ENCODE measurements at regions of chr5 and their contacts with region 1.

Region 1: DNA sequence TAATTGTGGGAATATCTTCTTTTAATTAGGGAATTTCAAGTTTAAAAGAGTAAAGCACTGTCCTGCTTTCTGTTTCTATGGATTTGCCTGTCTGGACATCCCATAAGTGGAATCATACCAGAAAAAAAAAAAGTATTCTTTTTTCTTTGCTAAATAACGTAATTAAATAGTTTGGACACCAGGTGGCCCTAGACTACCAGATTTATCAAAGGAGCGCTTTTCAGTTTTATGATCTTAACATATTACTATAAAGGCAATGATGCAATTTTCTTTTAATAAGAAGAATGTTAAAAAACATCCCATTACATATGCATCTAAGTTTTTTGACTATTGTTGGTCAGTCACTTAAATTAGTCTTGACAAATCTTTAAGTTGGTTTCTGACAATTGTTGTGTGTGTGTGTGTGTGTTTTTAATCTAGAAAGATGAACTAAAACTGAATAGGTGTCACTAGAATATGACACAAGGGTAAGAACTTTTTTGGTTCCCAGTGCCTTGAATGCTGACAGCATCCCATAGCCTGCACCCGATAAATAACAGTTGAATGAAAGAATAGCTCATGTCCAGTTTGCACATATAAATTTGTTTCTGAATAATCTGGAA is 49.5 kb downstream of the C5orf22 start:
- DNase-seq: no peak
- H3K4me3 ChIP-seq: no peak overlapping the region
- H3K27ac ChIP-seq: no peak overlapping the region
- H3K4me1 ChIP-seq: no peaks in the 10 kb centered on the region
- H3K27me3 ChIP-seq: peaks cover 0 to 10% (median 0%) of the 10 kb centered on the region in 4 donors
- CTCF ChIP-seq: peak in 5 of 6 experiments; percentile 26 to 66 (median 44)
- POLR2A ChIP-seq: no peak

Region 2: DNA sequence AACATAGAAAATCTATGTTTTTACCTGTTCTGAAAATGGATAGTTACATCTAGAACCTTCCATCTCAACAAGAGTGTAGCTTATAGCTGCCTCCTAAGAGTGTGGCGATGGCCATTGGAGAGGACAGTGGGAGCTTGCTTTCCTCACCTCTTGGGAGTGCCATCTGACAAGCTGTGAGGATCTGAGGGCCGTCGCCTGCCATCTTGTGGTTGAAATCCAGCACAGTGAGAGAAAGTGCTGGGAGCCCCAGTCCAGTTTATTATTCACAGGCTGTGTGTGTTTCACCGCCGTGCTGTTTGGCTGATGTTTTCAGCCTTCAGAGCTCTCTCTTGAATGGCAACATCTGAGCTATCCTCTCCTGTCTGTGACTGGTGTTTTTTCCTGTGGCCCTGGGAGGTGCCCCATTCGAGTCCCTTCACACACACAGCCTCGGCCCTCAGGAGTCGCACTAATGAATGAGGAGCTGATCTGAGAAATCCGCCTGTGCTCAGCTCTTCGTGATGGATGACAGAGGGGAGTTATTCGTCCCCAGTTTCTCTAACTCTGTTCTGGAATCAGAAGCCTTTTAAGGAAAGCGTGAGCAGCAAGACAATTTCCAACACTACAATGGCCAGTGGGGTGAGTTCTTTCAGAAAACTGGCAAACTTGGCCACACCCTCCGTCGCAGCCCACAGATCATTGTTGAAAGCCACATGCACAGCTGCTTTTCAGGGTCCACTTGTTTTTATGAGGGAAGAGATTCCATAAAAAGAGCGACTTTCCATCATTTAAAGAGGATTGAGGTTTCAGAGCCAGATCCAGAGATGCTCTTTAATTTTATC is 227.7 kb after region 1 on chr5:
- intact Hi-C with region 1: loop called (anchors 5 kb)
- DNase-seq: no peak
- H3K4me3 ChIP-seq: no peak overlapping the region
- H3K27ac ChIP-seq: no peak overlapping the region
- H3K4me1 ChIP-seq: no peaks in the 10 kb centered on the region
- H3K27me3 ChIP-seq: peaks cover 0 to 5% (median 0%) of the 10 kb centered on the region in 4 donors
- CTCF ChIP-seq: peak in 5 of 6 experiments; percentile 62 to 81 (median 69)
- POLR2A ChIP-seq: no peak

Region 3: DNA sequence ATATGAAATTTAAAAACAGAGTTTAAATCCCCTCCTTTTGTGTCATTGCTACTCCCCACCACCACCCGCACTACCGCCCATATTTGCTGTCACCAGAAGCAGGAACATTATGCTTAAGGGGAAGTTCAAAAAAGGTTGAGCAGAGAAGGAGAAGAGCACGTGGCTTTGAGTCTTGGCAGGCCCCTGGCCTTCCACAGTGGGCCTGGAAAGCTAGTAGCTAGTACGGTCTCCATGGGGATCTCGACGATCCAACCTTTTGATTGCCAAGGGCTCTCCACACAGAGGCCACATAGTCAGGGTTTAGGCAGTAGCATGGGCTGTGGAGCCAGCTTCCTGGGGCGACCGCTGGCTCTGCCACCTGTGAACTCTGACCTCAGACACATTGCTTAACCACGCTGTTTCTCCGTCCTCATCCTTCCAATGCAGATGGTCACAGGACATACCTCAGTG is 502.4 kb after region 1 on chr5:
- intact Hi-C with region 1: loop called (anchors 5 kb)
- DNase-seq: no peak
- H3K4me3 ChIP-seq: no peak overlapping the region
- H3K27ac ChIP-seq: no peak overlapping the region
- H3K4me1 ChIP-seq: no peaks in the 10 kb centered on the region
- H3K27me3 ChIP-seq: no peaks in the 10 kb centered on the region
- CTCF ChIP-seq: no peak
- POLR2A ChIP-seq: no peak